B cell (primary cell): ENCODE measurements at regions of chr14 and their contacts with region 1.

Region 1: DNA sequence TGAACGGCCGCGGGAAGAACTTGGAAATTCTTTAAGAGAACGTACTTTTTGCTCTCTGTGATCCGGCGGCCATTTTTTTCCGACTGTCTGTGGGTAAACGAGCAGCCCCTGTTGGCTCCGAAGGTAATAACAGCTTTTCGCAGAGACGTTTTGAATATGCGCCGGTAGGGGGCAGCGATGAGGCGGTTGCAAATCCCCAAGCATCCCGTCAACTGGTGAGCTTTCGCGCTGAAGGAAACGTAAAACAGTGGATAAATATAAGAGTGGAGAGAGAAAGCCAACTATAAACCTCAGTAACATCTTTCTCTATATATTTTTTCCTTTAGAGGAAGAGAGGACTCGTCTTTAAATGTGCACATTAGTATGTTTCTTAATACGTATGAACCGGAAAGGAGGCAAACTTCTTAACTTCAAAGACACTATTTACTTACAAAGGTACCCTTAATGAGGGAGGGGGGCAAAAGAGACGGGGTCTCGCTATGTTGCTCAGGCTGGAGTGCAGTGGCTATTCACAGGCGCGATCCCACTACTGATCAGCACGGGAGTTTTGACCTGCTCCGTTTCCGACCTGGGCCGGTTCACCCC is 9.6 kb upstream of the NEMF start:
- DNase-seq: peak; percentile 94
- ATAC-seq: peak; percentile 46
- H3K4me3 ChIP-seq: peak overlapping the region; percentile 64 to 99 (median 89)
- H3K4me3 Mint-ChIP-seq: no peak overlapping the region
- H3K27ac ChIP-seq: peak overlapping the region; percentile 96 to 99
- H3K27ac Mint-ChIP-seq: no peak overlapping the region
- H3K4me1 ChIP-seq: peaks cover 35 to 48% of the 10 kb centered on the region in 2 donors
- H3K4me1 Mint-ChIP-seq: peaks cover 25% of the 10 kb centered on the region
- H3K27me3 ChIP-seq: no peaks in the 10 kb centered on the region
- H3K27me3 Mint-ChIP-seq: no peaks in the 10 kb centered on the region
- CTCF ChIP-seq: peak; percentile 100

Region 2: DNA sequence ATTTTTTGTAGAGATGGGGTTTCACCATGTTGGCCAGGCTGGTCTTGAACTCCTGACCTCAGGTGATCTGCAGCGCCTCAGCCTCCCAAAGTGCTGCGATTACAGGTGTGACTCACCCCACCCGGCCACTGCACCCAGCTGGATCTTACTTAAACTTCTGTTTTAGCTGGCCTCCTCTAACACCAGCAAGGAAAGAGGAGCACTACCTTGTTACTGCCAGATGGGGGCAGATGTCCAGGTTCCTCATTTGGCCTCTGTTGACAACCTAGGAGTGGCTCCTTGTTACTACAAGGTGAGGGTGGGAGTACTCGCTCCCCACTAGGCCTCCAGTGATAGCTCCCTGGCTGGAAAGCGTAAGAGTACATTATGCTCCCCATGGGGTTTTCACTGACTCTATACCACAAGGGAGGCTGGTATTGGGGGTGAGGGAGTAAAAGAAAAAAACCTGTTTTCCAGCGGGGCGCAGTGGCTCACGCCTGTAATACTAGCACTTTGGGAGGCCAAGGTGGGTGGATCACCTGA is 17.6 kb after region 1 on chr14:
- CTCF ChIA-PET with region 1: interaction called, 49 read pairs
- POLR2A ChIA-PET with region 1: interaction called, 8 read pairs
- intact Hi-C with region 1: no loop called
- DNase-seq: peak; percentile 69
- ATAC-seq: peak; percentile 85
- H3K4me3 ChIP-seq: no peak overlapping the region
- H3K4me3 Mint-ChIP-seq: no peak overlapping the region
- H3K27ac ChIP-seq: peak overlapping the region in 1 of 2 donors; percentile 59
- H3K27ac Mint-ChIP-seq: peak overlapping the region; percentile 72
- H3K4me1 ChIP-seq: peaks cover 12 to 16% of the 10 kb centered on the region in 2 donors
- H3K4me1 Mint-ChIP-seq: peaks cover 15% of the 10 kb centered on the region
- H3K27me3 ChIP-seq: no peaks in the 10 kb centered on the region
- H3K27me3 Mint-ChIP-seq: no peaks in the 10 kb centered on the region
- CTCF ChIP-seq: peak; percentile 58

Region 3: DNA sequence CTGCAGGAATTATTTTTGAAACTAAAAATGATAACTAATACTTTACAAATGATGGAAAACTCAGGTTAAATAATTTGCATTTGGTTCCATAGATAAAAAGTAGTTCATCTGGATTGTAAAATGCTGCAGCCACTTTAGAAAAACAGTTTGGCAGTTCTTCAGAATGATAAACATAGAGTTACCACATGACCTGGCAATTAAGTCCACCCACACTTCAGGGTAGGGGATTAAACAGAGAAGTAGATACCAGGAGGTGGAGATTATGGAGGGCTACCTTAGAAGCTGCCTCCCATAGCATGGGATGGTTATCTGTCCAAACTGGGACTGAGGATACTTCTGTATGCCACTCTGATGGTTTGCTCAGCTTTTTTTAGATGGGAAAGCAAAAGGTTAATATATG is 52.9 kb after region 1 on chr14:
- CTCF ChIA-PET with region 1: no interaction called
- POLR2A ChIA-PET with region 1: no interaction called
- intact Hi-C with region 1: no loop called
- DNase-seq: no peak
- ATAC-seq: no peak
- H3K4me3 ChIP-seq: no peak overlapping the region
- H3K4me3 Mint-ChIP-seq: no peak overlapping the region
- H3K27ac ChIP-seq: no peak overlapping the region
- H3K27ac Mint-ChIP-seq: peak overlapping the region; percentile 54
- H3K4me1 ChIP-seq: no peaks in the 10 kb centered on the region
- H3K4me1 Mint-ChIP-seq: peaks cover 12% of the 10 kb centered on the region
- H3K27me3 ChIP-seq: no peaks in the 10 kb centered on the region
- H3K27me3 Mint-ChIP-seq: no peaks in the 10 kb centered on the region
- CTCF ChIP-seq: no peak

Region 4: GRCh38 chr14:49977126-49977841 is 115.1 kb after region 1 on chr14:
- CTCF ChIA-PET with region 1: interaction called, 23 read pairs
- POLR2A ChIA-PET with region 1: interaction called, 5 read pairs
- intact Hi-C with region 1: no loop called
- DNase-seq: peak; percentile 80
- ATAC-seq: peak; percentile 85
- H3K4me3 ChIP-seq: peak overlapping the region; percentile 26 to 69 (median 48)
- H3K4me3 Mint-ChIP-seq: peak overlapping the region; percentile 83
- H3K27ac ChIP-seq: peak overlapping the region; percentile 84 to 87
- H3K27ac Mint-ChIP-seq: peak overlapping the region; percentile 90
- H3K4me1 ChIP-seq: peaks cover 85 to 88% of the 10 kb centered on the region in 2 donors
- H3K4me1 Mint-ChIP-seq: peaks cover 80% of the 10 kb centered on the region
- H3K27me3 ChIP-seq: no peaks in the 10 kb centered on the region
- H3K27me3 Mint-ChIP-seq: no peaks in the 10 kb centered on the region
- CTCF ChIP-seq: no peak

Region 5: DNA sequence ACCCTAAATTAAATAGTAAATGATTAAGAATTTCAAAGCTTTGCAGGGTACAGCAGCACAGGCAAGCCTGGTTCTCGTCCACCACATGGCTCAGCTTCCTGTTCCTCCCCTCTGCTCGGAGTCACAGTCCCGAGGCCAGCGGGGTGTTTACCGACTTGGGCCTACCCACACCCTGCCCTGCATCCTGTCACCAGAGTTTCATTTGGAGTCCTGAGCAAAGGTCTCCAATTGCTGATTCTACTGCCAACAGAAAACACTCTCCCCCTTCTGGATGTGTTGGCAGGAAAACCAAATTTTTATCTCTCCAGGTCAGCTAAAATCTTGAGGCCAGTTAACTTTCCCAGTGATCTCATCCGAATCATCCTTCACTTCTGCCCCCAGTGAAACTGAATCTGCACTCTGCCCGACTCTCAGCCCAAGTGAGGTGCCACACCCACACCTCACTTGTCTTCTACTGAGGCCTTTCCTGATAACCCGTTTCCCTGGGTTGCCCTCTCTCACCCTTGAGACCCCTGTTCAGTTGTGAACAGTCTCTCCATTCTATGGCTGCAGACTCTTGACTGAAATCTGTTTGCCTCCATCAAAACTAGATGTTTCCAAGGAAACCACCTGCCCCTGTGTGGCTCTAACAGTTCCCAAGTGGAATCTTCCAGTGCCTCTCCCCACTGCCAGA is 183.0 kb after region 1 on chr14:
- CTCF ChIA-PET with region 1: interaction called, 20 read pairs
- POLR2A ChIA-PET with region 1: interaction called, 11 read pairs
- intact Hi-C with region 1: no loop called
- DNase-seq: peak; percentile 75
- ATAC-seq: peak; percentile 71
- H3K4me3 ChIP-seq: no peak overlapping the region
- H3K4me3 Mint-ChIP-seq: peak overlapping the region; percentile 49
- H3K27ac ChIP-seq: peak overlapping the region; percentile 92 to 95
- H3K27ac Mint-ChIP-seq: peak overlapping the region; percentile 88
- H3K4me1 ChIP-seq: peaks cover 60 to 62% of the 10 kb centered on the region in 2 donors
- H3K4me1 Mint-ChIP-seq: peaks cover 76% of the 10 kb centered on the region
- H3K27me3 ChIP-seq: no peaks in the 10 kb centered on the region
- H3K27me3 Mint-ChIP-seq: no peaks in the 10 kb centered on the region
- CTCF ChIP-seq: no peak

Region 6: GRCh38 chr14:50067723-50068495 is 205.7 kb after region 1 on chr14:
- CTCF ChIA-PET with region 1: interaction called, 89 read pairs
- POLR2A ChIA-PET with region 1: interaction called, 25 read pairs
- intact Hi-C with region 1: loop called (anchors 1 kb)
- DNase-seq: no peak
- ATAC-seq: no peak
- H3K4me3 ChIP-seq: no peak overlapping the region
- H3K4me3 Mint-ChIP-seq: no peak overlapping the region
- H3K27ac ChIP-seq: no peak overlapping the region
- H3K27ac Mint-ChIP-seq: peak overlapping the region; percentile 100
- H3K4me1 ChIP-seq: peaks cover 51 to 52% of the 10 kb centered on the region in 2 donors
- H3K4me1 Mint-ChIP-seq: peaks cover 69% of the 10 kb centered on the region
- H3K27me3 ChIP-seq: no peaks in the 10 kb centered on the region
- H3K27me3 Mint-ChIP-seq: no peaks in the 10 kb centered on the region
- CTCF ChIP-seq: no peak

Region 7: DNA sequence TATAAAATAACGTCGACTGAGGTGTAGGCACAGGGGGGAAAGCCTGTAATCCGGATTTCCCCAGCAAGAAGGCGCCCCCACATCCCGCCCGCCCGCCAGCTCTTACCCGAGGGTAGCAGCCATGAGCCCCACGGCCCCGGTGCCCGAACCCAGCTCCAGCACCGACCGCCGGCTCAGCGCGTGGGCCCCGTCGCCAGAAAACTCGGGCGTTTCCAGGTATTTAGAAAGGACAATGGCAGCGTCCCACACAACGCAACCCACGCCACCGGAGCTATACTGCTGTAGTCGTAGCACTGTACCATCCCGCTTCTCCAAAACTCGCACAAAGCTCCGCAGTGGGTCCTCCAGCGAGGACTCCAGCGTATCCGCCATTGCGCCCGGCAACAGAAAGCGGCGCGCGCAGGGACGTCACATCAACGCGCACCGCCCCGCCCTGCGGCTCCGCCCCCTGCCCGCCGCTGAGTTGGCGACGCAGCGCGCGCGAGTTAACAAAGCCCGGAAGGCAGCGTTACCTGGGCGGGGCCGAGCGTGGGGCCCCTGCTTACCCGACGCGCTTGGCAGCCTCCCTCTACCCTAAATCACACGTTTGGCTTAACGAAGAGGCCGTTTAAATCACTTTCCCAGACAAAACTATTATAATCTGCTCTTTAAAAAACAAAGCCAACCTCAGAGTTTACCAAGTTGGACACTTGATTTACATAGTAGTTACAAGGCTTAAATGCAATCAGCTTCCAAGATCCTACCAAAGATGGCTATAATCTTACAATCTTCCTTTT is 254.2 kb after region 1 on chr14 and contains the start of gene VCPKMT:
- CTCF ChIA-PET with region 1: interaction called, 52 read pairs
- POLR2A ChIA-PET with region 1: interaction called, 7 read pairs
- intact Hi-C with region 1: no loop called
- DNase-seq: peak; percentile 97
- ATAC-seq: peak; percentile 97
- H3K4me3 ChIP-seq: peak within 1 kb of the TSS; percentile 69 to 92 (median 87)
- H3K4me3 Mint-ChIP-seq: peak within 1 kb of the TSS; percentile 98
- H3K27ac ChIP-seq: peak within 1 kb of the TSS; percentile 92 to 99
- H3K27ac Mint-ChIP-seq: peak within 1 kb of the TSS; percentile 98
- H3K4me1 ChIP-seq: peaks cover 44 to 45% of the 10 kb centered on the region in 2 donors
- H3K4me1 Mint-ChIP-seq: peaks cover 45% of the 10 kb centered on the region
- H3K27me3 ChIP-seq: no peaks in the 10 kb centered on the region
- H3K27me3 Mint-ChIP-seq: no peaks in the 10 kb centered on the region
- CTCF ChIP-seq: no peak
- total RNA-seq, gene VCPKMT: 22.8 and 27.1 TPM in 2 replicates